PC-3 (cell line): ENCODE measurements at regions of chr10 and their contacts with region 1.

Region 1: DNA sequence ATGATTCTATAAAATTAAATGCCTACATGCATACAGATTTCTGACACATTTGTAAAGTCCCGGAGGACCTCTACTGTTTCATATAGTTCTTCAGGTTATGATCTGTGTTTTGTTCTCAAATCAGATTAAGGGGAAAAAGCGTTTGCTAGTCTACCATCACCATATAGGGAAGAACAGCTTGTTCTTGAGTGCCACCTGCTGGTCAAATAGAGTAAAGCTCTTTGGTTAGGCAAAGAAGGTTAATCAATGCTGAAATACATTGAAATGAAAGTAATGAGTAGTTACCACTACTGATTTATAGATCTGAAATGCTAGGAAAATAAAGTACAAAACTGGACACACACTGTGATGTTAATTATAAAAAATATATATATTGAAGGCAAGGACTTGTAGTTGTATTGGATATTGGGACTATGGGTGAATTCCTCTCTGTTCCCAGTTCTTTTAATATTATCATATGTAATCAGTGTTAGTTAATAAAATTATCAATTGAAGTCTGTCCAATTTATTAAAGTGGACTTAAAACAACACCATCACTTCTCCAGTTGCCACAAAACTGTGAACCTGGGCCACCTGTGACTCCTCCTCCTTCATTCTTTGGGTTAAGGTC is 72.6 kb upstream of the PDLIM1 start:
- DNase-seq: peak; percentile 80
- ATAC-seq: peak; percentile 83
- H3K4me3 ChIP-seq: no peak overlapping the region
- H3K27ac ChIP-seq: no peak overlapping the region
- H3K4me1 ChIP-seq: no peaks in the 10 kb centered on the region
- H3K27me3 ChIP-seq: no peaks in the 10 kb centered on the region
- CTCF ChIP-seq: peak; percentile 84

Region 2: DNA sequence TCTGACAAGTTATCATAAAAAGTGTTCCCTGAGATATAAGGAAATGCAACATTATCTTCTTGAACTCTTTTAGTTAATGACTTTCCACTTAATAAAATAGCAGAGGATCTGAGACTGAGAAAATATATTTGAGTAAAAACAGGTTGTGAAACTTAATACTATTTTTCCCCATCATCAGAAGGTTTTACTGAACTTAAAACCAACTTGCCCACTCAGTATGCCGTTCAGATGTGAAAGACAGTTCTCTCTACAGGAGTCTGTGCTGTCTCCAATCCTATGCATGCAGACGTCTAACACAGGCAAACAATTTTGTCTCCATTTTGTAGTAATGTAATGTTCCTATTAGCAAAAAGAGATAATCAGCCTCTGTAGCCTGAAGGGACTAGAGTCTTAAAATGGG is 718.1 kb before region 1 on chr10:
- CTCF ChIA-PET with region 1: interaction called, 12 read pairs
- POLR2A ChIA-PET with region 1: no interaction called
- intact Hi-C with region 1: no loop called
- DNase-seq: no peak
- ATAC-seq: no peak
- H3K4me3 ChIP-seq: no peak overlapping the region
- H3K27ac ChIP-seq: no peak overlapping the region
- H3K4me1 ChIP-seq: peaks cover 5% of the 10 kb centered on the region; the same call in 1 of the 2 replicates
- H3K27me3 ChIP-seq: peaks cover 15% of the 10 kb centered on the region; the same call in 1 of the 2 replicates
- CTCF ChIP-seq: no peak

Region 3: GRCh38 chr10:95183271-95184230 is 179.9 kb before region 1 on chr10:
- CTCF ChIA-PET with region 1: no interaction called
- POLR2A ChIA-PET with region 1: no interaction called
- intact Hi-C with region 1: loop called (anchors 1 kb)
- DNase-seq: peak; percentile 85
- ATAC-seq: peak; percentile 97
- H3K4me3 ChIP-seq: peak overlapping the region; percentile 71
- H3K27ac ChIP-seq: no peak overlapping the region
- H3K4me1 ChIP-seq: no peaks in the 10 kb centered on the region; the same call in 1 of the 2 replicates
- H3K27me3 ChIP-seq: no peaks in the 10 kb centered on the region
- CTCF ChIP-seq: peak; percentile 87

Region 4: DNA sequence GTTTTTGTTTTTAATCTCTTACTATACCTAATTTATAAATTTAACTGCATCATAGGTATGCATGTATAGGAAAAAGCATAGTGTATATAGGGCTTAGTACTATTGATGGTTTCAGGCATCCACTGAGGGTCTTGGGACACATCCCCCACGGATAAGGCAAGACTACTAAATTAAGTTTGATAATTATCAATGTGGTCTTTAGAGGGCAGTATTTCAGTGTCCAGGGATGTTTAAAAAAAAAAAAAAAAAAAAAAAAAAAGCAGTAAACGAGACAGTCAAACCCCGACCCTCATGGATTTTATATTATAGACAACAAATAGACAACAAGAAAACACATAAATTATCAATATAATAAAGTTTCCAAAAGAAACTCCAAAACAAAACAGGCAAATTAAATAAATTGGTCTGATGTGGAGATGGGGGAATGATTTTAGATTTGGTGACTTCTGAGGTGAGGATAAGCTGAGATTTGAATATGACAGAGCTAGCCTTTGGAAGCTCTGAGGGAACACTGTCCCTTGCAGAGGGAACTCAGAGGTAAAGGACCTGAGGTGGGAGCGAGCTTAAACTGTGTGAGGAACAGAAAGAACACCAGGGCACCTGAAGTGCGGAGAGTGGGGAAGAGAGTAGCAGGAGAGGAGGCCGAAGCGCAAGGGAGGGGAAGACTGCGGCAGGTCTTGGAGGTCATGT is 154.6 kb before region 1 on chr10:
- CTCF ChIA-PET with region 1: no interaction called
- POLR2A ChIA-PET with region 1: no interaction called
- intact Hi-C with region 1: loop called (anchors 2 kb)
- DNase-seq: peak; percentile 33
- ATAC-seq: no peak; the same call in 1 of the 2 replicates
- H3K4me3 ChIP-seq: no peak overlapping the region
- H3K27ac ChIP-seq: no peak overlapping the region
- H3K4me1 ChIP-seq: peaks cover 20% of the 10 kb centered on the region
- H3K27me3 ChIP-seq: no peaks in the 10 kb centered on the region
- CTCF ChIP-seq: peak; percentile 59

Region 5: GRCh38 chr10:95289003-95289920 is 74.1 kb before region 1 on chr10:
- CTCF ChIA-PET with region 1: no interaction called
- POLR2A ChIA-PET with region 1: no interaction called
- intact Hi-C with region 1: loop called (anchors 2 kb)
- DNase-seq: peak; percentile 71
- ATAC-seq: peak; percentile 23
- H3K4me3 ChIP-seq: peak overlapping the region; percentile 95
- H3K27ac ChIP-seq: peak overlapping the region; percentile 29; the same call in 1 of the 2 replicates
- H3K4me1 ChIP-seq: peaks cover 26% of the 10 kb centered on the region
- H3K27me3 ChIP-seq: no peaks in the 10 kb centered on the region
- CTCF ChIP-seq: peak; percentile 45

Region 6: GRCh38 chr10:95423164-95424005 is 60.0 kb after region 1 on chr10:
- CTCF ChIA-PET with region 1: no interaction called
- POLR2A ChIA-PET with region 1: no interaction called
- intact Hi-C with region 1: no loop called
- DNase-seq: no peak
- ATAC-seq: peak; percentile 29
- H3K4me3 ChIP-seq: no peak overlapping the region
- H3K27ac ChIP-seq: no peak overlapping the region
- H3K4me1 ChIP-seq: peaks cover 6% of the 10 kb centered on the region; the same call in 1 of the 2 replicates
- H3K27me3 ChIP-seq: no peaks in the 10 kb centered on the region
- CTCF ChIP-seq: no peak